Posterior cingulate gyrus (tissue), 11 donors: ENCODE measurements at regions of chr10 and their contacts with region 1.

Region 1: GRCh38 chr10:79195091-79195923 is 126.5 kb downstream of the ZMIZ1 start:
- DNase-seq: peak; percentile 70 to 98 (median 86)

Region 2: GRCh38 chr10:78047314-78047891 is 1147.9 kb before region 1 on chr10:
- intact Hi-C with region 1: loop called (anchors 1 kb)
- DNase-seq: peak; percentile 81 to 98 (median 96)

Region 3: DNA sequence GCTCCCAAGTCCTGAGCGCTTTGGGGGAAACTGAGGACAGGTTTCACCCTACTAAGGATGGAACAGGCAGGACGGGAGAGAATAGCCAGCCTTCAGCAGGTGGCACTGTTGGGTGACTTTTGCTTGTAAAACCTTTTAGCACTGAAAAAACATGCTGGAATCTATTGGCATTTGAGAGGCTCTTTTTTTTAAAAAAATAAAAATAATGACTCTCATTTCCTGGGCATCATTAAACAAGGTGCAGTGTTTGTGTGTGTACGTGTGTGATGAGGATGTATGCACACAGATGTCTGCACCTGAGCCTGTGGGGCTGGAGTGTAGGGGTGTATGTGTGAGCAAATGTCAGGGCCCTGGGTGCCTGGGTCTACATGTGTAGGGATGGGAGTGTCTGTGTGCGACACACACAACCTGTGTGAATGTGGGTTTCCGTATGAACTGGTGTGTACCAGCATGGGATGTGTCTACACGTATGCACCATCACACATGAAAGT is 983.7 kb before region 1 on chr10:
- intact Hi-C with region 1: loop called (anchors 2 kb)
- DNase-seq: peak in 8 of 10 donors; percentile 29 to 95 (median 72)

Region 4: GRCh38 chr10:78852466-78853240 is 342.7 kb before region 1 on chr10:
- intact Hi-C with region 1: loop called (anchors 5 kb)
- DNase-seq: peak in 1 of 10 donors; percentile 68

Region 5: GRCh38 chr10:78972947-78973900 is 222.1 kb before region 1 on chr10:
- intact Hi-C with region 1: loop called (anchors 2 kb)
- DNase-seq: peak; percentile 71 to 97 (median 81)

Region 6: DNA sequence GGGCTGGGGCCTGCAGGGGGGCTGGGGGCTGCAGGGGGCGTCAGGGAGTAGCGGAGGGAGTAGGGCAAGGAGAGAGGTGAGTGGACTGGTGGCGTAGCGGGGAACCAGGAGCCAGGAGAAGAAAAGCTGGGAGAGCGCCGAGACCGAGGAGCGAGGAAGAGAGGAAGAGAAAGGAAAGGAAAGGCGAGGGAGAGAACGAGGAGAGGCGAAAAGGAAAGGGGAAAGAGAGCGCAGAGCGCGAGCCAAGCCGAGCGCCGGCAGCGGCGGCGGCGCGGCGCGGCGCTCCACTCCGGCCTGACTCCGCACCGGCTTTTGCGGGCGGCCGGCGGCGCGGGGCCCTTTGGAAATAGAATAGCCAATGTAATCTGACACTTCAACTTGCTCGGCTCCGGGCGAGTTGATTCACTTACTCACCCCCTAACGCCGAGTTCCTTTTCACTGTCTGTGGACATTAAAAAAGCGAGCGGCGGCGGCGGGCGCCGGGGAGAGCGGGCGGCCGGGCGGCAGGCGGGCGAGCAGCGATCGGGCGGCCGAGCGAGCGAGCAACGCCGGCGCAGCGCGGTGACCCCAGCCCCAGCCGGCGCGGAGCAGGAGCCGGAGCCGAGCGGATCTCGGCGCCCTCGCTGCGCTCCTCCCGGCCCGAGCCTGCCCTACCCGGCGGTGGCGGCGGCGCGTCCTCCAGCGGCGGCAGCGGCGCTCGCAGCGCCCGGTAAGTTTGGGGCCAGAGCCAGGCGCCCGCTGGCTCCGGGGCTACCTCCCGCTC is 126.6 kb before region 1 on chr10 and contains the start of gene ZMIZ1:
- intact Hi-C with region 1: loop called (anchors 1 kb)
- DNase-seq: peak; percentile 75 to 97 (median 84)

Region 7: GRCh38 chr10:79149662-79150443 is 45.5 kb before region 1 on chr10:
- intact Hi-C with region 1: loop called (anchors 5 kb)
- DNase-seq: peak in 1 of 10 donors; percentile 71